Gastrocnemius medialis (tissue), 4 donors: ENCODE measurements at regions of chr9 and their contacts with region 1.

Region 1: DNA sequence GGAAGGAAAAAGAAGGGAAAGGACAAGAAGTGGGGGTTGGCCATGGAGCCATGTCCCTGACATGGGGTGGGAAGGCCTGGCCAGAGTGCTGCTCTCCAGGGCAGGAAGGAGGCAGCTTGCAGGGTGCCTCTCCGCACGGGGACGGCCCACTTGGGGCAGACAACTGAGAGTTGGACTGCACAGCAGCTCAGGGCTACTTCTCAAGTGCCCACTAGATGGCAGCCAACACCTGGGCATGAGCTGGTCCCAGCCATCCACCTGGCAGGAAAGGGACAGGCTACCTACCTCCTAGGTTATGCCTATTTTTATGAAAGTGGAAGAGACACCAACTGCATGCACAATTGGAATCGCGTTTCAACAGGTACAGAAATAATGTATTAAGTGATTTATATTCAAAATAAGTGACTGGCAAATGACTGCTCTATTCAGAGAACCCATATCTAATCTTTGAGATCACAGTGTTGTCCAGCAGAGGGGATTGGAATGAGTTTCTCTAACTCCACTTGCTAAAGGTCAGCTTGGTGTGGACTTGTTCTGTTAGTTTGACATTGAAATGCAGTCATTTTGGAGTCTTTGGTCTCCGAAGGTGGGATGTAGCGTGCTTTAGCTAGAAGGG is 113.4 kb downstream of the SYK start:
- DNase-seq: peak; percentile 64 to 70
- ATAC-seq: peak; percentile 63 to 72
- H3K4me3 ChIP-seq: no peak overlapping the region
- H3K27ac ChIP-seq: peak overlapping the region in 1 of 4 donors; percentile 19
- H3K4me1 ChIP-seq: peaks cover 7 to 8% of the 10 kb centered on the region in 2 donors
- H3K27me3 ChIP-seq: no peaks in the 10 kb centered on the region
- CTCF ChIP-seq: peak; percentile 86 to 96 (median 93)
- POLR2A ChIP-seq: no peak

Region 2: DNA sequence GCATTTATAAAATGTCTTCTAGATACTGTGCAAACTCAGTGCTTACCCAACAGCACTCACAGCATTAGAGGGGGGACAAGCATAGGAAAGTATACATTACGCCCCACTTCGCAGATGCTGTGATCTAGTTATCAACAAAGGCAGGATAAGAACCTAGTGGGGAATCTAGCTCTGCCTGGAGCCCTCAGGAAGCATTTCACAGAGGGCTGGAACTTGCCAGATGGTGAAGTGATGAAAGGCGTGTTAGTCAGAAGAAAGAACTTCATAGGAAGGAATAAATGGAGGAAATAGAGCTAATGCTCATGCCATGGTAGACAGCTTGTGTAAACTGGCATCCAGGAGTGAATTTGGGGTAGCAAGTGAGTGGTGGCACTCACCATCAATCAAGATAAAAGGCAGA is 298.2 kb before region 1 on chr9:
- in situ Hi-C with region 1: no loop called
- intact Hi-C with region 1: no loop called
- DNase-seq: no peak
- ATAC-seq: no peak
- H3K4me3 ChIP-seq: no peak overlapping the region
- H3K27ac ChIP-seq: no peak overlapping the region
- H3K4me1 ChIP-seq: no peaks in the 10 kb centered on the region
- H3K27me3 ChIP-seq: no peaks in the 10 kb centered on the region
- CTCF ChIP-seq: no peak
- POLR2A ChIP-seq: no peak

Region 3: GRCh38 chr9:91047993-91048607 is 133.1 kb after region 1 on chr9:
- in situ Hi-C with region 1: no loop called
- intact Hi-C with region 1: no loop called
- DNase-seq: no peak
- ATAC-seq: peak; percentile 31 to 55
- H3K4me3 ChIP-seq: no peak overlapping the region
- H3K27ac ChIP-seq: peak overlapping the region in 3 of 4 donors; percentile 23 to 48 (median 37)
- H3K4me1 ChIP-seq: peaks cover 6 to 8% of the 10 kb centered on the region in 2 donors
- H3K27me3 ChIP-seq: no peaks in the 10 kb centered on the region
- CTCF ChIP-seq: no peak
- POLR2A ChIP-seq: peak in 1 of 2 donors; percentile 1

Region 4: GRCh38 chr9:91117959-91118703 is 203.2 kb after region 1 on chr9:
- in situ Hi-C with region 1: no loop called
- intact Hi-C with region 1: loop called (anchors 5 kb)
- DNase-seq: peak; percentile 84 to 90
- ATAC-seq: peak; percentile 86 to 89
- H3K4me3 ChIP-seq: peak overlapping the region; percentile 41 to 50 (median 42)
- H3K27ac ChIP-seq: peak overlapping the region; percentile 80 to 90 (median 82)
- H3K4me1 ChIP-seq: peaks cover 25 to 32% of the 10 kb centered on the region in 2 donors
- H3K27me3 ChIP-seq: no peaks in the 10 kb centered on the region
- CTCF ChIP-seq: no peak
- POLR2A ChIP-seq: peak; percentile 55 to 70

Region 5: DNA sequence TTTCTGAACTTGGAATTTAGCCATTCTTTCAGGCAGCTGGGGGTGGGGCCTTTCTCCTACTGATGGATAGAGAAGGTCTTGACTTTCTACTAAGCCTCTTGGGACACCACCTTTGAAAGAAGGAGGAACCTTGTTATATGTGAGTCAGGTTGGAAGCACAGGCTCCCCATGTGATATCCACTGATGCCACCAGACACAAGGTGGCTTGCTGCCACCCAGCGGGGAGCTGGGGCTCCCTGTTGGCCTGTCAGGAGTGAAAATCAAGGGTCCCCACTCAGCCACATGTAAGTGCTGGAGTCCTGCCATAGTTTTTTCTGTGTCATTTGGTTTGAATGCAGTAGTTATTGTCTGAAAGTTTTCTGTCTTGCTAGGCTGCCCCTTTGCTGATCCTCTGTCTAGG is 761.1 kb after region 1 on chr9:
- in situ Hi-C with region 1: loop called (anchors 10 to 25 kb)
- intact Hi-C with region 1: no loop called
- DNase-seq: no peak
- ATAC-seq: no peak
- H3K4me3 ChIP-seq: no peak overlapping the region
- H3K27ac ChIP-seq: no peak overlapping the region
- H3K4me1 ChIP-seq: no peaks in the 10 kb centered on the region
- H3K27me3 ChIP-seq: no peaks in the 10 kb centered on the region
- CTCF ChIP-seq: no peak
- POLR2A ChIP-seq: no peak

Region 6: GRCh38 chr9:91727316-91727861 is 812.4 kb after region 1 on chr9:
- in situ Hi-C with region 1: loop called in 1 of 4 experiments (anchors 10 kb)
- intact Hi-C with region 1: loop called (anchors 1 kb)
- DNase-seq: no peak
- ATAC-seq: peak; percentile 33 to 64
- H3K4me3 ChIP-seq: no peak overlapping the region
- H3K27ac ChIP-seq: no peak overlapping the region
- H3K4me1 ChIP-seq: no peaks in the 10 kb centered on the region
- H3K27me3 ChIP-seq: no peaks in the 10 kb centered on the region
- CTCF ChIP-seq: peak; percentile 37 to 71 (median 52)
- POLR2A ChIP-seq: no peak